Activated T-helper 1 cell treated with anti-CD3 and anti-CD28 coated beads, Interleukin-12 subunit alpha, Interleukin-12 subunit beta, Interleukin-2, Interleukin-4 antibody, amounts not matched to agents 30 ng/mL and 10 ng/mL and 1 ng/mL, durations not matched to agents 14 hours and 24 hours and 36 hours (primary cell): ENCODE measurements at regions of chr5 and their contacts with region 1.

Region 1: DNA sequence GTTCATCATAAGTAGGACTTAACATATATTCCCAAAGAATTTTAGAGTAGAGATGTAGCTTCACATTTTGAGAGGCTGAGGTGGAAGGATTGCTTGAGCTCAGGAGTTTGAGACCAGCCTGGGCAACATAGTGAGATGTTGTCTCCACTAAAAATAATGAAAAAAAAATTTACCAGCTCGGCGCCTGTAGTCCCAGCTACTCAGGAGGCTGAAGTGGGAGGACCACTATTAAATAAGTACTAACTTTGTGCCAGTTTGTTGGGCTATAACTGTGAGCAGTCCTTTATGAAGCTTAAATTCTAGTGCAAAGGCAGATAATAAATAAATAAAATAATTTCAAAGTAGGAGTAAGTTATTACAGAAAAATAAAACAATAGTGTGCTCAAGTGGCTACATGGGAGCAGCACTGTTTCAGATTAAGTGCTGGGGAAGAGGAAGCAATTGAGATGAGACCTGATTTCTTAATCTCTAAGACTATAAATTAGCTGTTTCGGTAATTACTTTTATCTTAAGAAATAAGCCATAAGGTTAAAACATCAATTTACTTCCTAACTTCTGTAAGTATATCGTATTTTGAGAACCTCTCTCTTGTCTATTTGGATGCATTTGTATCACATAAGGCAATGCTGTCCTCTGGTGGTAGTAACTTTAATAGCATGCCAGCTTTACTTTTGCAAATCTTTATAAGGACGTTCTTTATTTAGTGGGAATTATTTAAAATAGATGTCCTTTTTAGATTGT is 98.9 kb downstream of the CSNK1G3 start:
- DNase-seq: peak; percentile 11
- H3K4me3 Mint-ChIP-seq: no peak overlapping the region
- H3K27ac Mint-ChIP-seq: no peak overlapping the region
- H3K4me1 Mint-ChIP-seq: peaks cover 12% of the 10 kb centered on the region
- H3K27me3 Mint-ChIP-seq: no peaks in the 10 kb centered on the region

Region 2: DNA sequence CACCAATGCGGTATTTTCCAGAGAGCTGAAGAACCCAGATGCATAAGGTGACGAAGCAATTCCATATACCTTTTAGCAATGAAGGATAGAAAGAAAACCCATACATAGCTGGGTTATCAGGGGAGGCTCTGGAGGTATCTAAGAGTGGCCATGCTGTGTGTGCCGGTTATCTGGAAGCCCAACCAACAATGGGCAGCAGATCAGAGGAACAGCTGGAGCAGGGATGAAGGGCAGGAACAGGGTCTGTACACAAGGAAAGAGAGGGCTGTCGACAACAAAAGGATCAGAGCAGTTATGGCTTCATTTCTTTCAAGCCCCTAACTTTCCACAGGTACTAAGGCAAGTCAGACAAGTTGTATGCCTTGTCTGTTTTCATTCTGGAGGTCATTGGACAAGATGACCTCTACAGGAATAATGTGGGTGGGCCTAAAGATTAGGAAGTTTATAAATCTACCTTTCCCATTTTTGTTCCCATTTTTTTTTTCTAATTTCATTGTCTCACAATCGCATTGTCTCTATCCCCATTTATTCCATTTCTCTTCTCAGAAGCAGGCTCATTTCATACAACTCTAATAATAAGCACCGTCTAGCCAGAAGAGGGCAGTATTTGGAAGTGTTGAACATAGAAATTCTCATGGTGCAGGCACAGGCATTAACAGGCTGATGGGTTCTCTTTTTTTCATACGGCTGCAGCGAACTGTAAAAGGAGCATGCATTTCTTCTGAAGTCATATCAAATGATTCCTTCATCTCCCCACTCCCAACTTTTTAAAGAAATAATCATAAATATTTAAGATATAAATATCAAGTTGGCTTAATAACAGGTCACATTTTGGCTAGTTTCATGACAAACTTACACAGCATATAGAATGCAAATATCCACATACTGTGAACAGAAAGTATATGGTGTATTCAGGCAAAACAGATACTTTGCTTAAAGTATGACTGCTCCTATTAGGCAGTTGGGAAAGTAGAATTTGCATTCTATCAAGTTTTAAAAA is 1418.0 kb before region 1 on chr5:
- intact Hi-C with region 1: loop called (anchors 10 kb)
- DNase-seq: no peak
- H3K4me3 Mint-ChIP-seq: no peak overlapping the region
- H3K27ac Mint-ChIP-seq: no peak overlapping the region
- H3K4me1 Mint-ChIP-seq: no peaks in the 10 kb centered on the region
- H3K27me3 Mint-ChIP-seq: peaks cover 2% of the 10 kb centered on the region

Region 3: GRCh38 chr5:123089914-123090670 is 520.7 kb before region 1 on chr5:
- intact Hi-C with region 1: loop called (anchors 5 kb)
- DNase-seq: no peak
- H3K4me3 Mint-ChIP-seq: no peak overlapping the region
- H3K27ac Mint-ChIP-seq: no peak overlapping the region
- H3K4me1 Mint-ChIP-seq: peaks cover 10% of the 10 kb centered on the region
- H3K27me3 Mint-ChIP-seq: peaks cover 78% of the 10 kb centered on the region

Region 4: GRCh38 chr5:123371575-123372179 is 239.2 kb before region 1 on chr5:
- intact Hi-C with region 1: loop called (anchors 1 kb)
- DNase-seq: no peak
- H3K4me3 Mint-ChIP-seq: no peak overlapping the region
- H3K27ac Mint-ChIP-seq: no peak overlapping the region
- H3K4me1 Mint-ChIP-seq: no peaks in the 10 kb centered on the region
- H3K27me3 Mint-ChIP-seq: no peaks in the 10 kb centered on the region